ENCODE measurements at regions of chr18 and their contacts with region 1.

Region 1: DNA sequence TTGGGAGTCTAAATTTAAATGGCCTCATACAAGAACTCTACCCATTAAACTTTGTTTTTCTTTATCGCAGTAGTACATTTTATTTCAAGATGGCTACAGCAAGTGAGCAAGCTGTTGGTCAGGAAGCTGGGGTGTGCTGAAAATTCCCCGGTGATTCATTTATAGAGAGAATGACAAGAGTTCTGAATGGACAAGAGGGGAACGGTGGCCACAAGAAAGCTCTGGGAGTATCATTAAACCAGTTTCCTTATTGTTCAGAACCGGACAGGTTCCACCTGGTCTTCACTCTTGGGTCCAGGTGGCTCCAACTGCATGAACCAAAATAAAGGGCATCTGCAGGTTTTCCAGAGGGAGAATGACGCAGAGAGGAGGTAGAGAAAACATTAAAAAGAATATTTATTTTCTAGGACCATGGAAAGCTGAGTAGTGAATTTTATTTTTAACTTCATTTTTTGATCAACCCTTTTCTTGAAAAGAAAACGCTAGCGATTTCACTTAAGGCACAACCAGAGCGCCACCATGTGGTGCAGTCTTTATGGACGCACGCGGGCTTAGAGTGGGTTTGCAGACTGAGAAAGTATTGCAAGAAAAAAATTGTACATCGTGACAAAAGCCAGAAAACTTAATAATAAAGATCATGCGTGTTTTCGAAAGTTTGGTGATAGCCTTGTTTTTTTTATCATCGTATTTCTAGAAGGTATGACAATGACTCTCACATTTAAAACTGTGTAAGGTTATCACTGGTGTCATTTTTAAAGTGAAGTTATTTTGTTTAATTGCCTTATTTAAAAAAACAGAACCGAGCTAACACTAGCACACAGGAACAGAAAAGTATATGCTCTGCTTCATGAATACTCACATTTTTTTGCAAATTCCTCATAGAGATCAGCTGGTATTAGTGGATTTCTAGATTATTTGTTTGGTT is 97.9 kb upstream of the NOL4 start:
- DNase-seq: peak; percentile 31 to 32
- H3K4me3 ChIP-seq: no peak overlapping the region
- H3K27ac ChIP-seq: no peak overlapping the region
- H3K4me1 ChIP-seq: no peaks in the 10 kb centered on the region
- H3K27me3 ChIP-seq: no peaks in the 10 kb centered on the region
- CTCF ChIP-seq: peak; percentile 54

Region 2: GRCh38 chr18:33231474-33232317 is 1090.9 kb before region 1 on chr18:
- CTCF ChIA-PET with region 1: no interaction called
- POLR2A ChIA-PET with region 1: no interaction called
- intact Hi-C with region 1: loop called (anchors 5 kb)
- DNase-seq: peak; percentile 31 to 37
- H3K4me3 ChIP-seq: no peak overlapping the region
- H3K27ac ChIP-seq: no peak overlapping the region
- H3K4me1 ChIP-seq: no peaks in the 10 kb centered on the region
- H3K27me3 ChIP-seq: no peaks in the 10 kb centered on the region
- CTCF ChIP-seq: peak; percentile 82

Region 3: DNA sequence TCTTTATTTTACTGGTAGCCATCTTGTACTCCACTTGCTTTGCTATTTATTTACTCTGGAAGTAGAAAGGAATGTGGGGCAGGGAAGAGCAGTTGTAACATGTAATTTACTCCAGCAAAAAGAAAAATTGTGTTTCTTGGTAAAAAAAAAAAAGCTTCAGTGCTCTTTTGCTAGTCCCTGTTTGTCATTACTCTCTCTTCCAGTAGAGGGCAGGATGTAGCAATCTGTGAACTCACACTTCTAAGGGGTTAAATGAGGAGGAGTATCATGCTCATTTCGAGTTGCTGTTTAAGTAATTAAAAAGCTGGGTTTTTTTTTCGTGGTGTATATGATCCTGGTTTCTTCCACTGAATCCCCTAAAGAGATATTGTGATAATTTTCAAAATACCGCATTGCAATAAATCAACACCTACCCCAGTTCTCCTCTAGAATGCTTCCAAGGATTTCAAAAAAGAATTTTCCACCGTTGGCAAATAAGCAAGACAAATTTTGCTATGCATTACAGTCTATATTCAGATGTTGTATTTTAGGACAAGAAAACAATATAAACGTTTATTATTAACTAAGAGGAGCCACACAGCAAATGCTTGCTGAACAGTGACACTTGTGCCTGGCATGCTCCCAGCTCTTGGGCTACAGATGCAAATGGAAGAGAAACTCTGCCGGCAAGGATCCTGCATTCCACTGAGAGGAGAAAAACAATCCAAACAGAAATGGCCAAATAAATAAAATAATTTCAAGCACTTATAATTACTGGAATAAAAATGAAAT is 483.0 kb before region 1 on chr18:
- CTCF ChIA-PET with region 1: no interaction called
- POLR2A ChIA-PET with region 1: no interaction called
- intact Hi-C with region 1: loop called (anchors 2 kb)
- DNase-seq: no peak
- H3K4me3 ChIP-seq: no peak overlapping the region
- H3K27ac ChIP-seq: no peak overlapping the region
- H3K4me1 ChIP-seq: no peaks in the 10 kb centered on the region
- H3K27me3 ChIP-seq: no peaks in the 10 kb centered on the region
- CTCF ChIP-seq: peak; percentile 65

Region 4: GRCh38 chr18:34122724-34123334 is 199.8 kb before region 1 on chr18:
- CTCF ChIA-PET with region 1: no interaction called
- POLR2A ChIA-PET with region 1: no interaction called
- intact Hi-C with region 1: loop called (anchors 5 kb)
- DNase-seq: peak in 1 of 2 experiments; percentile 1
- H3K4me3 ChIP-seq: no peak overlapping the region
- H3K27ac ChIP-seq: no peak overlapping the region
- H3K4me1 ChIP-seq: peaks cover 9% of the 10 kb centered on the region; the same call in 1 of the 2 replicates
- H3K27me3 ChIP-seq: no peaks in the 10 kb centered on the region
- CTCF ChIP-seq: peak; percentile 71

Region 5: GRCh38 chr18:34647251-34647650 is 324.6 kb after region 1 on chr18:
- CTCF ChIA-PET with region 1: no interaction called
- POLR2A ChIA-PET with region 1: no interaction called
- intact Hi-C with region 1: no loop called
- DNase-seq: no peak
- H3K4me3 ChIP-seq: no peak overlapping the region
- H3K27ac ChIP-seq: no peak overlapping the region
- H3K4me1 ChIP-seq: no peaks in the 10 kb centered on the region
- H3K27me3 ChIP-seq: no peaks in the 10 kb centered on the region
- CTCF ChIP-seq: no peak

Measured in PC-9 (cell line).